Activated CD4-positive, alpha-beta T cell treated with anti-CD3 and anti-CD28 coated beads, Interleukin-2, amount 10 ng/mL, durations not matched to agents 24 days and 14 days (primary cell): ENCODE measurements at regions of chr11 and their contacts with region 1.

Region 1: GRCh38 chr11:117807482-117808327 is 10.7 kb upstream of the DSCAML1 start:
- DNase-seq: peak; percentile 92
- H3K4me3 Mint-ChIP-seq: no peak overlapping the region
- H3K27ac Mint-ChIP-seq: no peak overlapping the region
- H3K4me1 Mint-ChIP-seq: peaks cover 20% of the 10 kb centered on the region
- H3K27me3 Mint-ChIP-seq: peaks cover 5% of the 10 kb centered on the region

Region 2: GRCh38 chr11:117843666-117844484 is 36.2 kb after region 1 on chr11:
- intact Hi-C with region 1: loop called (anchors 2 kb)
- DNase-seq: peak; percentile 94
- H3K4me3 Mint-ChIP-seq: no peak overlapping the region
- H3K27ac Mint-ChIP-seq: no peak overlapping the region
- H3K4me1 Mint-ChIP-seq: no peaks in the 10 kb centered on the region
- H3K27me3 Mint-ChIP-seq: peaks cover 22% of the 10 kb centered on the region

Region 3: GRCh38 chr11:117885777-117886176 is 78.1 kb after region 1 on chr11:
- intact Hi-C with region 1: no loop called
- DNase-seq: no peak
- H3K4me3 Mint-ChIP-seq: no peak overlapping the region
- H3K27ac Mint-ChIP-seq: no peak overlapping the region
- H3K4me1 Mint-ChIP-seq: peaks cover 2% of the 10 kb centered on the region
- H3K27me3 Mint-ChIP-seq: peaks cover 34% of the 10 kb centered on the region

Region 4: GRCh38 chr11:118171269-118172062 is 363.8 kb after region 1 on chr11:
- intact Hi-C with region 1: loop called (anchors 10 kb)
- DNase-seq: peak; percentile 92
- H3K4me3 Mint-ChIP-seq: peak overlapping the region; percentile 12
- H3K27ac Mint-ChIP-seq: no peak overlapping the region
- H3K4me1 Mint-ChIP-seq: peaks cover 8% of the 10 kb centered on the region
- H3K27me3 Mint-ChIP-seq: peaks cover 20% of the 10 kb centered on the region

Region 5: DNA sequence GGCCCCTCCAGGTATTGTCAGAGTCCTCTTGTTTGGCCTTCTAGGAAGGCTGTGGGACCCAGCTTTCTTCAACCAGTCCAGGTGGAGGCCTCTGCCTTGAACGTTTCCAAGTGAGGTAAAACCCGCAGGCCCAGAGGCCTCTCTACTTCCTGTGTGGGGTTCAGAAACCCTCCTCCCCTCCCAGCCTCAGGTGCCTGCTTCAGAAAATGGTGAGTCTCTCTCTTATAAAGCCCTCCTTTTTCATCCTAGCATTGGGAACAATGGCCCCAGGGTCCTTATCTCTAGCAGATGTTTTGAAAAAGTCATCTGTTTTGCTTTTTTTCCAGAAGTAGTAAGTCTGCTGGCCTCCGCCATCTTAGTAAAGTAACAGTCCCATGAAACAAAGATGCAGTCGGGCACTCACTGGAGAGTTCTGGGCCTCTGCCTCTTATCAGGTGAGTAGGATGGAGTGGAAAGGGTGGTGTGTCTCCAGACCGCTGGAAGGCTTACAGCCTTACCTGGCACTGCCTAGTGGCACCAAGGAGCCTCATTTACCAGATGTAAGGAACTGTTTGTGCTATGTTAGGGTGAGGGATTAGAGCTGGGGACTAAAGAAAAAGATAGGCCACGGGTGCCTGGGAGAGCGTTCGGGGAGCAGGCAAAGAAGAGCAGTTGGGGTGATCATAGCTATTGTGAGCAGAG is 497.0 kb after region 1 on chr11 and contains the start of gene CD3E:
- intact Hi-C with region 1: no loop called
- DNase-seq: peak; percentile 91
- H3K4me3 Mint-ChIP-seq: peak within 1 kb of the TSS; percentile 97
- H3K27ac Mint-ChIP-seq: peak within 1 kb of the TSS; percentile 99
- H3K4me1 Mint-ChIP-seq: peaks cover 50% of the 10 kb centered on the region
- H3K27me3 Mint-ChIP-seq: no peaks in the 10 kb centered on the region
- total RNA-seq, gene CD3E: 571 TPM in 2 replicates